ENCODE measurements at regions of chr16 and their contacts with region 1.

Region 1: DNA sequence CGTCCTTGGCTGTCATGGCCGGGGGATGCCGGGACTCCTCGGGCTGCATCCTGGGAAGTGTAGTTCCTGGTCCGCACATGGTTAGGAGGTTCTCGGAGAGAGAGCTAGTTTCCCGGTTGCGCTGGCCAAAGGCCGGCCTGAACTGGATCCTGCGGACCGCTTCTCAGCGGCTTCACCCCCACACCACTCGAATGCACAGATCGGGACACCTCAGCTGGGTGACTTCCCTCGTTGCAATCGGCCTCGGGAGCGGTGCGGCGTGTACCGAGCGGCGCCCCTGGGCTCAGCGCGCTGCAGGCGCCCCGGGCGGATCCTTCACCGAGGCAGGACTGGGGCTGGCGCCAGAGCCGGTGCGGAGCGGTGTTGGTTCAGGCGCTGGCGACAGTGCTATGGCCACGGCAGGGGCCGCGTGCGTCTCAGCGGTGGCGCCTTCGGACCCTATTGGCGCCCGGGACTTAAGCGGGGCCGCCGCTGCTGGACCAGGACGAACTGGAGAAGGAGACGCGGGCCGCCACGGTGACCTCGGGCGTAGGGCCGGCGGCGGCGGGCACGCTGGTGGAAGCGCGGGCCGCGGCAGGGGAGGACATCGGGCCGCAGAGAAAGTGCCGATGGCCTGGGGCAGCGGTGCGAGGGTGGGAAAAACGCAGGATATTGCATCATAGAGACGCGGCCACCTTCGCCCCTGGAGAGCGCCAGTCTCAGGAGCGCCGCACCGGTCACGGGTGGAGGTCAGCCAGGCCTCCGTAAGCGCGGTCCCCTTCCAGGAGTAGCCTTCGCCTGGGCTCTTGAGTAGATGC is 11.4 kb downstream of the ZNF629 start:
- DNase-seq: peak; percentile 75
- H3K4me3 ChIP-seq: peak overlapping the region; percentile 44 to 78 (median 59)
- H3K27ac ChIP-seq: peak overlapping the region; percentile 8
- H3K4me1 ChIP-seq: peaks cover 14% of the 10 kb centered on the region
- H3K27me3 ChIP-seq: no peaks in the 10 kb centered on the region
- CTCF ChIP-seq: no peak

Region 2: GRCh38 chr16:30724641-30725417 is 50.8 kb before region 1 on chr16:
- CTCF ChIA-PET with region 1: no interaction called
- dilution Hi-C with region 1: loop called (anchors 5 kb)
- in situ Hi-C with region 1: no loop called
- intact Hi-C with region 1: no loop called
- DNase-seq: no peak
- H3K4me3 ChIP-seq: no peak overlapping the region
- H3K27ac ChIP-seq: no peak overlapping the region
- H3K4me1 ChIP-seq: no peaks in the 10 kb centered on the region
- H3K27me3 ChIP-seq: no peaks in the 10 kb centered on the region
- CTCF ChIP-seq: no peak

Region 3: GRCh38 chr16:30740364-30741251 is 35.0 kb before region 1 on chr16:
- CTCF ChIA-PET with region 1: no interaction called
- dilution Hi-C with region 1: no loop called
- in situ Hi-C with region 1: no loop called
- intact Hi-C with region 1: loop called (anchors 2 kb)
- DNase-seq: peak; percentile 98
- H3K4me3 ChIP-seq: peak overlapping the region; percentile 75 to 88 (median 81)
- H3K27ac ChIP-seq: peak overlapping the region; percentile 100
- H3K4me1 ChIP-seq: peaks cover 34% of the 10 kb centered on the region
- H3K27me3 ChIP-seq: no peaks in the 10 kb centered on the region
- CTCF ChIP-seq: no peak

Region 4: DNA sequence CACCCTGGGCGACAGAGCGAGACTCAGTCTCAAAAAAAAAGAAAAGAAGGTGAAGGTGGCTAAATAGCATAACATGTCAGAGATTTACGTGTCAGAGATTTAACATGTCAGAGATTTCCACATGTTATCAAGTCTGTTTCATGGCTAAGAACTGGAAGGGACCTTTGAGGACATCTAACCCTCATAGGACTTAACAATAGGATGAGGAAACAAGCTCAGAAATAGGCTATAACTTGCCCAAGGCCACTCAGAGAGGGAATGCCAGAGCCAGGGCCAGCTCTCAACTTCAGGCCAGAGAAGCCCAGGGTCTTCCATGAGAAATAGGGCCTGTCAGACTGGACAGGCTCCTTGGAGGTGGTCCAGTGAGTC is 38.2 kb after region 1 on chr16:
- CTCF ChIA-PET with region 1: no interaction called
- dilution Hi-C with region 1: no loop called
- in situ Hi-C with region 1: no loop called
- intact Hi-C with region 1: loop called (anchors 5 kb)
- DNase-seq: no peak
- H3K4me3 ChIP-seq: peak overlapping the region; percentile 37 to 62 (median 48)
- H3K27ac ChIP-seq: peak overlapping the region; percentile 24
- H3K4me1 ChIP-seq: peaks cover 11% of the 10 kb centered on the region
- H3K27me3 ChIP-seq: no peaks in the 10 kb centered on the region
- CTCF ChIP-seq: no peak

Region 5: GRCh38 chr16:30934827-30935557 is 159.4 kb after region 1 on chr16:
- CTCF ChIA-PET with region 1: no interaction called
- dilution Hi-C with region 1: loop called (anchors 5 kb)
- in situ Hi-C with region 1: no loop called
- intact Hi-C with region 1: no loop called
- DNase-seq: peak; percentile 26
- H3K4me3 ChIP-seq: no peak overlapping the region
- H3K27ac ChIP-seq: no peak overlapping the region
- H3K4me1 ChIP-seq: peaks cover 3% of the 10 kb centered on the region
- H3K27me3 ChIP-seq: no peaks in the 10 kb centered on the region
- CTCF ChIP-seq: peak; percentile 53 to 68